PC-9 (cell line): ENCODE measurements at regions of chr1 and their contacts with region 1.

Region 1: DNA sequence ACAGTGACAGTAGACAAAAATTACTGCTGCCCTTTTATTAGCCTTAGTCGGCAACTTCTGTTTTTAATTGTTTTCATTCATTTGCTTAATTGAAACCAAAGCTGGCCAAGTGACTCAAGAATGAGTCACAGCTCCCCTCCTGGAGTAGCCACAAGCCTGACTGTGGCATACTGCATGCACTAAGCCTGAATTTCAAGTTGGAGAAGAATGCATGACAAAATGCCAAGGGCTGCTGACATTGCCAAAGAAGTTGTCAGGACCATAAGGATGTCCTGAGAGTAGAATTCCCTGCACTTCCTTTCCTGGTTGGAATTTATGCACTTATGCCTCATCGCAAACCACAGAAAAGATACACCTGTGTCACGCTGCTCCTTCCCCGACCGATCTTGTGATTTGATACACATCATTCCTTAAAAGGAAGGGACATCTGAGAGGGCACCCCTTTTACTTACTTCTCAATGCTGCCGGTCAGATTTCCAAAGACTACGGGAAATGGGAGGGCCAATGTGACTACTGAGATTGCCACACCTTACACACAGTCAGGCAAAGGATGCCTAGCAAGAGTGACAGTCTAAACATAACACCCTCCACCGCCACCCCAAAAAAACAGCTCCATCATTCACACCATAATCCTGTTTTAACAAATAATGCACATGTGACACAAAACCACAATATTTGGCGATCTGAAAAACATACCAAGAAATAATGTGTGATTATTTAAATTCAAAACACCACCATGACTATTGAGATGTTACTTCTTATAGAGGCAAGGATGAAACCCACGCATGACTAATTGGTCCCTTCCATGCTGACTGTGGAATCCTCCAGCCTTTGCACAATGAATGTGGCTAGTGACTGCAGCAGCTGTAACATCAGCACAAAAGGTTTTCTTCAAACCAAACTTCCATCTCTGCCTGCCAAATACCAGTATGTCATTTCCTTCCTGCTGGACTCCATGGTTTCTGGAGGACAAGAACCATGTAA is 28.2 kb downstream of the VAV3 start:
- DNase-seq: peak; percentile 83 to 100
- H3K4me3 ChIP-seq: peak overlapping the region; percentile 18; the same call in 1 of the 2 replicates
- H3K27ac ChIP-seq: peak overlapping the region; percentile 76
- H3K4me1 ChIP-seq: peaks cover 34% of the 10 kb centered on the region
- H3K27me3 ChIP-seq: no peaks in the 10 kb centered on the region
- CTCF ChIP-seq: no peak

Region 2: DNA sequence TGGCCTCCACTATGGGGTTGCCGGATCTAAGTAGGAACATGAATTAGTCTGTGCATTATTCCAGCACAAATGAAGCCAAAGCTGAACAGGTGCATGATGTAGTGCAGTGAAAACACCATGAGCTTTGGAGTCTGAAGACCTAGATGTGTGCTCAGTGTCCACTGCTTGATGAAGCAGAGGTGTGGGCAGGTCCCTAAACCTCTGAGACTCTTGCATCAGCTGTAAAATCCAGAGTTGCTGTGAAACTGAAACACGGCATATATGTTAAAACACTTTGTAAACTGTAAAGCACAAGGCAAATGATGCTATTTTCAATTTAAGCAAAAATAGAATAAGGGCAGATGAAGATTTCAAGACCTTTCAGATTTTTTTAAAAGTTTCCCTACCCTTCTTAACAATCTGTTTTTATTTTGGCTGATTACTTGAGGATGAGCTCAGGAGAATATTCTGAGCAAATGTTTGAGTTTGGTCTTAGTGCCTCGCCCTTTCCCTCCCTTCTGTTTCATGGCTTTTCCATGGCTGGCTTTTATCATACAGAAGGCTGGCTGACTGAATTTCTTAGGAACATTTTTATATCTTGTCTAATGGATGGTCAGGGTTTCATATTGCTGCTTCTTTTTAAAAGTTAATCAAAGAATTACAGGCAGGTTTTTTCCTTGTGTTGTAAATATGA is 574.2 kb before region 1 on chr1:
- CTCF ChIA-PET with region 1: no interaction called
- POLR2A ChIA-PET with region 1: no interaction called
- intact Hi-C with region 1: no loop called
- DNase-seq: no peak
- H3K4me3 ChIP-seq: no peak overlapping the region
- H3K27ac ChIP-seq: no peak overlapping the region
- H3K4me1 ChIP-seq: no peaks in the 10 kb centered on the region
- H3K27me3 ChIP-seq: no peaks in the 10 kb centered on the region
- CTCF ChIP-seq: no peak

Region 3: GRCh38 chr1:107460035-107460434 is 476.8 kb before region 1 on chr1:
- CTCF ChIA-PET with region 1: no interaction called
- POLR2A ChIA-PET with region 1: no interaction called
- intact Hi-C with region 1: no loop called
- DNase-seq: no peak
- H3K4me3 ChIP-seq: no peak overlapping the region
- H3K27ac ChIP-seq: no peak overlapping the region
- H3K4me1 ChIP-seq: no peaks in the 10 kb centered on the region
- H3K27me3 ChIP-seq: no peaks in the 10 kb centered on the region
- CTCF ChIP-seq: no peak

Region 4: GRCh38 chr1:107515702-107516101 is 421.1 kb before region 1 on chr1:
- CTCF ChIA-PET with region 1: no interaction called
- POLR2A ChIA-PET with region 1: no interaction called
- intact Hi-C with region 1: no loop called
- DNase-seq: no peak
- H3K4me3 ChIP-seq: no peak overlapping the region
- H3K27ac ChIP-seq: no peak overlapping the region
- H3K4me1 ChIP-seq: no peaks in the 10 kb centered on the region
- H3K27me3 ChIP-seq: peaks cover 6% of the 10 kb centered on the region; the same call in 1 of the 2 replicates
- CTCF ChIP-seq: no peak

Region 5: GRCh38 chr1:107782217-107782845 is 154.5 kb before region 1 on chr1:
- CTCF ChIA-PET with region 1: no interaction called
- POLR2A ChIA-PET with region 1: no interaction called
- intact Hi-C with region 1: loop called (anchors 10 kb)
- DNase-seq: peak; percentile 11 to 46
- H3K4me3 ChIP-seq: no peak overlapping the region
- H3K27ac ChIP-seq: no peak overlapping the region
- H3K4me1 ChIP-seq: peaks cover 10% of the 10 kb centered on the region
- H3K27me3 ChIP-seq: no peaks in the 10 kb centered on the region
- CTCF ChIP-seq: peak; percentile 99

Region 6: DNA sequence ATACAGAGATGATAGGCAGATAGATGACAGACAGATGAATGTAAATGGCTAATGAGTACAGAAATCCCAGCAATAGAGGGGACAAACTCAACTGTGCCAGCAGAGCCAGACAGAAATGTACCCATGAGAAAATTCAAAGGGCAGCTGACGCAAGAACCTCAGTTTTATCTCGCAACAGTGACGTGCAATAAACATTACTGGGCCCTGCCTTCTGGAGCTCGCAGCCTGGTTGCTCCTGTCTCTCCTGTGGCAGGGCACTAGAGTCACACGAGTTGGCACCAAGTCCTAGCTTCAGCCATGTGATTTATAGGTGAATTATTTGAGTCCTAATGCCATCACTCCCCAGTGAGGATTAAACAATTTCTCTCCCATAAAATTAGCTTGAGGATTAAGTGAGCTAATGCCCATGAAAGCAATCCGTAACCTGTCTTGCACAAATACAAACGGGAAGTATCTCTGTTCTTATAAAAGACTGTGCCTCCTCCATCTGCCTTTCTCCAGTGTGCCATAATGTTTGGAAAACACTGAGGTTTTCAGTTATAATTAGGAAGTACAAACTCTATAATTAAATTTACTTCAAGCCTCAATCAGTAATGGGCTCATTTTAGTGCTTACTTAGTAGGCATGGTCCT is 22.5 kb before region 1 on chr1:
- CTCF ChIA-PET with region 1: no interaction called
- POLR2A ChIA-PET with region 1: interaction called, 14 read pairs
- intact Hi-C with region 1: no loop called
- DNase-seq: no peak
- H3K4me3 ChIP-seq: no peak overlapping the region
- H3K27ac ChIP-seq: no peak overlapping the region
- H3K4me1 ChIP-seq: no peaks in the 10 kb centered on the region
- H3K27me3 ChIP-seq: no peaks in the 10 kb centered on the region
- CTCF ChIP-seq: no peak

Region 7: GRCh38 chr1:107963601-107964335 is 27.0 kb after region 1 on chr1:
- CTCF ChIA-PET with region 1: no interaction called
- POLR2A ChIA-PET with region 1: no interaction called
- intact Hi-C with region 1: loop called (anchors 2 kb)
- DNase-seq: no peak
- H3K4me3 ChIP-seq: no peak overlapping the region
- H3K27ac ChIP-seq: no peak overlapping the region
- H3K4me1 ChIP-seq: peaks cover 11% of the 10 kb centered on the region
- H3K27me3 ChIP-seq: no peaks in the 10 kb centered on the region
- CTCF ChIP-seq: no peak

Region 8: DNA sequence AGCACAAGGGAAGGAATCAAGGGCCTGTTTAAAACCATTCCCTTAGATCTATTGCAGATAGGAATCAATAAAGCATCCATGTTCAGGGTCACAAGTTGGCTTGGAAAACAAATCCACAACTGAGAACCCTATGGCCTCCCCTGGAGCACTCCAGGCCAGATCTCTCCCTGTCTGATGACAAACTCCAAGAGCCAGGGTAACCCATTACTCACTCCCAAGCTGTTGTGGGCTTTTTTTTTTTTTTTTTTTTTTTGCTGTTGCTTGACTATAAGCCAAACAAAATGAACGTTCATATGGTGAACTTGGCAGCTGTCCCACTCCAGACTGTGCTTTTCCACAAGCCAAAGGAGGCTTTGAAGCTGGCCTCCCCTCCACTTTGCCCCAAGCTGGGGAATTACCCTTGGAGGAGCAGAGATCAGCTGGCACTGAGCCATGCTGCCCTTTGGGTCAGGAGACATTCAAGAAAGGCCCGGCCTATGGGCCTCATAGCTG is 63.9 kb after region 1 on chr1:
- CTCF ChIA-PET with region 1: no interaction called
- POLR2A ChIA-PET with region 1: no interaction called
- intact Hi-C with region 1: loop called (anchors 2 kb)
- DNase-seq: peak; percentile 66 to 75
- H3K4me3 ChIP-seq: no peak overlapping the region
- H3K27ac ChIP-seq: no peak overlapping the region
- H3K4me1 ChIP-seq: peaks cover 20% of the 10 kb centered on the region
- H3K27me3 ChIP-seq: no peaks in the 10 kb centered on the region
- CTCF ChIP-seq: no peak

Region 9: GRCh38 chr1:108016451-108016920 is 79.7 kb after region 1 on chr1:
- CTCF ChIA-PET with region 1: no interaction called
- POLR2A ChIA-PET with region 1: no interaction called
- intact Hi-C with region 1: loop called (anchors 1 kb)
- DNase-seq: peak; percentile 65 to 85
- H3K4me3 ChIP-seq: no peak overlapping the region
- H3K27ac ChIP-seq: no peak overlapping the region
- H3K4me1 ChIP-seq: peaks cover 28% of the 10 kb centered on the region
- H3K27me3 ChIP-seq: no peaks in the 10 kb centered on the region
- CTCF ChIP-seq: no peak

Region 10: DNA sequence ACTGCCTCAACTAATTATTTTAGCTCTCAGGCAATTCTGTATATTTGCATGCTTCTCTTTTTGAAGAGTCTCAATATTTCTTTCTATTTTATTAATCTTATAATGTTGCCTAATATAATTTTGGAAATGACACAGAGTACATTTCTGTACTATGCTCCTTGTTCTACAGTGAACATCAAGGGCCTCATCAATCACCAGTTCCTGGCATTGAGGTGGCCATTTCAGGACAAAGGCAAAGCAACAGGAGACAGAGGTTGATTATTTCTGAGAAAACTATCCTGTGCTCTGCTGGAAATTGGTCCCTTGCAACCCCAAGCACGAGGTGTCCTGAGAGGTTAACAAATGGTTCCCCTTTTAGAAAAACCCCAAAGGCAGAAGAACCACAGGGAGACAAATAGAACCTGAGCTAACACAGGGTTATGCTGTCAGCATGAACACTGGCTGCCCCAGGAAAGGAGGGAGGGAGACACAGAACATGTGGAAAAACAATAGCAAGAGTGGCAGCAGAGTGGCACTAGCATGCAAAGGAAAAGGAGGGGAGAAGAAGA is 92.1 kb after region 1 on chr1:
- CTCF ChIA-PET with region 1: no interaction called
- POLR2A ChIA-PET with region 1: no interaction called
- intact Hi-C with region 1: no loop called
- DNase-seq: no peak
- H3K4me3 ChIP-seq: no peak overlapping the region
- H3K27ac ChIP-seq: no peak overlapping the region
- H3K4me1 ChIP-seq: peaks cover 2% of the 10 kb centered on the region
- H3K27me3 ChIP-seq: no peaks in the 10 kb centered on the region
- CTCF ChIP-seq: no peak

Region 11: GRCh38 chr1:108118018-108118902 is 181.5 kb after region 1 on chr1:
- CTCF ChIA-PET with region 1: no interaction called
- POLR2A ChIA-PET with region 1: no interaction called
- intact Hi-C with region 1: loop called (anchors 2 kb)
- DNase-seq: peak; percentile 65 to 98
- H3K4me3 ChIP-seq: no peak overlapping the region
- H3K27ac ChIP-seq: peak overlapping the region; percentile 27
- H3K4me1 ChIP-seq: peaks cover 21% of the 10 kb centered on the region
- H3K27me3 ChIP-seq: no peaks in the 10 kb centered on the region
- CTCF ChIP-seq: no peak